ENCODE measurements at regions of chr15 and their contacts with region 1.

Region 1: DNA sequence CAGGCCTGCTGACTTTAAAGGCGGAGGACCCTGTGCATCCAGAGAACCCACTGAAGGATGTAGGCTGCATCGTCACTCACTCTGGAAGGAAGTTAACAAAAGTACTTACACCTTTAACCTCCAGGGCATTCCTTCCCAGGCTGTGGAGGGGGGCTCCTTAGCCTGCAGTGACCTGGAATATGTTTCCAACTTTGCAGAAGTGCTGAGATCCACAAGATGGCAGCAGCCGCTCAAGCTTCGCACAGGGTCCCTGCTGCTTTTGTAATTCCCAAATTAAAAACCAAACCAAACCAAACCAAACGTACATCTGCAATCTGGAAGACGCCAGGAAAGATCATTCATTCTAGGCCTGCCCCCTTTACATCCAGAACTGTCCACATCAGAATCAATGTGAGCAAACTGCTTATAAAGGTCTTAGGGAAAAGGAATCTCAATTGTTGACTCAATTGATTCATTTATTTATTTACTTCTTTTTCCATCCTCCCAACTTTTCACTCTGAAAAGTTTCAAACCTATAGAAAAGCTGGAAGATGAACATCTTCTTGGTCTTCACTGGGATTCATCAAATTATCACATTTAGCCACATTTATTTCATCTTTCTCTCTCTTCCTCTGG is 70.5 kb upstream of the KLHL25 start:
- DNase-seq: peak; percentile 71
- H3K4me3 ChIP-seq: peak overlapping the region in 1 of 2 experiments; percentile 34; a peak in 1 of 4 replicates
- H3K27ac ChIP-seq: no peak overlapping the region
- H3K4me1 ChIP-seq: no peaks in the 10 kb centered on the region
- H3K27me3 ChIP-seq: no peaks in the 10 kb centered on the region
- CTCF ChIP-seq: peak; percentile 86
- EP300 ChIP-seq: no peak
- RAD21 ChIP-seq: peak; percentile 98

Region 2: GRCh38 chr15:85515212-85515611 is 350.0 kb before region 1 on chr15:
- CTCF ChIA-PET with region 1: no interaction called
- POLR2A ChIA-PET with region 1: no interaction called
- DNase-seq: no peak
- H3K4me3 ChIP-seq: no peak overlapping the region
- H3K27ac ChIP-seq: no peak overlapping the region
- H3K4me1 ChIP-seq: no peaks in the 10 kb centered on the region; a peak in 1 of 4 replicates
- H3K27me3 ChIP-seq: no peaks in the 10 kb centered on the region
- CTCF ChIP-seq: no peak
- EP300 ChIP-seq: no peak
- RAD21 ChIP-seq: no peak

Region 3: GRCh38 chr15:85879332-85880163 is 14.4 kb after region 1 on chr15:
- CTCF ChIA-PET with region 1: interaction called, 24 read pairs
- POLR2A ChIA-PET with region 1: no interaction called
- DNase-seq: no peak
- H3K4me3 ChIP-seq: no peak overlapping the region
- H3K27ac ChIP-seq: no peak overlapping the region
- H3K4me1 ChIP-seq: no peaks in the 10 kb centered on the region; a peak in 1 of 4 replicates
- H3K27me3 ChIP-seq: no peaks in the 10 kb centered on the region
- CTCF ChIP-seq: no peak
- EP300 ChIP-seq: no peak
- RAD21 ChIP-seq: no peak

Region 4: DNA sequence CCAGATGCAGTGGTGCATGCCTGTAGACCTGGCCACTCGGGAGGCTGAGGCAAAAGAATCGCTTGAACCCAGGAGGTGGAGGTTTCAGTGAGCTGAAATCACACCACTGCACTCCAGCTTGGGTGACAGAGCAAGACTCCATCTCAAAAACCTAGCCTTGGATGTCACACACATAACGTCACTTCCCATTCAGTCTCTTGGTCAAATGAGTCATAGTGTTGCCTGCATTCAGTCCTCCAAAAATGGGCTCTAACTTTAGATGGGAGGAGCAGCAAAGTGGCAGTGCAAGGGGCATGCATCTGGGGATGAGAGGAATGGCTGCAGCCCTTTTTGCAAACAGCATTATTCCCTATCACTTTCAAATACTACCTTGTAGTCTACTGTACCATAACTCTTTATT is 151.6 kb after region 1 on chr15:
- CTCF ChIA-PET with region 1: no interaction called
- POLR2A ChIA-PET with region 1: no interaction called
- DNase-seq: no peak
- H3K4me3 ChIP-seq: no peak overlapping the region
- H3K27ac ChIP-seq: no peak overlapping the region
- H3K4me1 ChIP-seq: peaks cover 0 to 9% of the 10 kb centered on the region in 2 experiments; a peak in 2 of 4 replicates
- H3K27me3 ChIP-seq: no peaks in the 10 kb centered on the region
- CTCF ChIP-seq: no peak
- EP300 ChIP-seq: no peak
- RAD21 ChIP-seq: no peak

Measured in SK-N-SH (cell line).